Right ventricle myocardium inferior (tissue), 1 donor: ENCODE measurements at regions of chr12 and their contacts with region 1.

Region 1: DNA sequence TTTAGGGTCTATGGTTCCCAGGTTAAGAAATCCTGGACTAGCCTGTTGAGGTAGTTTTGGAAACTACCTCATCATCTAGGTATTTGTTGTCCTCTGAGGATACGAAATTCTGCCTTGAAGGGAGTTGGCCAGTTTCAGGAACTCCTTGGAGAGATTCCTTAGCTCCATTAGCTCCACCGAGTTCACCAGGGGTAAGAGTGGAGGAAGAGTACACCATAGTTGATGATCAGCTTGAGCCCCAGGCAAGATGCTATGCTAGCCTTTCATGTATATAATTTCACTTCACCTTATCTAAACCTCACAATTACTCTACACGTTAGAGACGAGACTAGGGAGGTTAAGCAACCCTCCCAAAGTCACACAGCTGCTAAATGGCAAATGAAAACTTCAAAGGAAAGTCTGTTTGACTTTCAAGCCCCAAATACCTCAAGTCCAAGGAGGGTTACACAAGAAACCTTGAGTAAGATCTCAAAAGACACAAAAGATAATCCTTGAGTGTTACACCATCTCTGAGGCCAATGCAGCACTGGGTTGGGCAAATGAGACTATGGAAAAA is 97.1 kb upstream of the KRAS start:
- DNase-seq: no peak
- ATAC-seq: no peak

Region 2: GRCh38 chr12:25295361-25295760 is 52.4 kb before region 1 on chr12:
- intact Hi-C with region 1: loop called (anchors 5 kb)
- DNase-seq: no peak
- ATAC-seq: no peak